PC-3 (cell line): ENCODE measurements at regions of chr7 and their contacts with region 1.

Region 1: GRCh38 chr7:87152107-87152844 is at the start of gene DMTF1:
- DNase-seq: peak; percentile 91
- ATAC-seq: peak; percentile 81
- H3K4me3 ChIP-seq: peak within 1 kb of the TSS; percentile 97
- H3K27ac ChIP-seq: peak within 1 kb of the TSS; percentile 91
- H3K4me1 ChIP-seq: peaks cover 34% of the 10 kb centered on the region
- H3K27me3 ChIP-seq: no peaks in the 10 kb centered on the region
- CTCF ChIP-seq: no peak
- total RNA-seq, gene DMTF1: 43.6 and 48.8 TPM in 2 replicates

Region 2: DNA sequence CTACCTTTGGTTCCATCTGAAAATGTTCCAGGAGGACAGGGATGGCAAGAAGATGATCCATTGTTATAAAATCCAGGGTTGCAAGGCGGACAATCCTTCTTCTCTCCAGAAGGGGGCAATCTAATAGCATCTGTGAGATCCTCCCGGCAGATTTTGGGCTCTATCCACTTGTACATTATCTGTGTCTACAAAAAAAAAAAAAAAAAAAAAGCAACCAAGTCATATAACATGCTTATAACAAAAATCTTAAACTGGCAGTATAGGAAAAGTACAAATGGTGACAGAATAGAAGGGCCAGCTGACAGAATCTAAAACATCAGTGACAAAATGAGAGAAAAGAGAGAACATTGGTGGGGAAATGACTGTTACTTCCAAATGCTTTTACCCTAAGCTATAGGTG is 225.5 kb before region 1 on chr7:
- CTCF ChIA-PET with region 1: interaction called, 4 read pairs
- POLR2A ChIA-PET with region 1: no interaction called
- intact Hi-C with region 1: loop called (anchors 1 kb)
- DNase-seq: peak; percentile 70
- ATAC-seq: peak; percentile 72
- H3K4me3 ChIP-seq: no peak overlapping the region
- H3K27ac ChIP-seq: no peak overlapping the region
- H3K4me1 ChIP-seq: peaks cover 4% of the 10 kb centered on the region
- H3K27me3 ChIP-seq: no peaks in the 10 kb centered on the region
- CTCF ChIP-seq: peak; percentile 78

Region 3: DNA sequence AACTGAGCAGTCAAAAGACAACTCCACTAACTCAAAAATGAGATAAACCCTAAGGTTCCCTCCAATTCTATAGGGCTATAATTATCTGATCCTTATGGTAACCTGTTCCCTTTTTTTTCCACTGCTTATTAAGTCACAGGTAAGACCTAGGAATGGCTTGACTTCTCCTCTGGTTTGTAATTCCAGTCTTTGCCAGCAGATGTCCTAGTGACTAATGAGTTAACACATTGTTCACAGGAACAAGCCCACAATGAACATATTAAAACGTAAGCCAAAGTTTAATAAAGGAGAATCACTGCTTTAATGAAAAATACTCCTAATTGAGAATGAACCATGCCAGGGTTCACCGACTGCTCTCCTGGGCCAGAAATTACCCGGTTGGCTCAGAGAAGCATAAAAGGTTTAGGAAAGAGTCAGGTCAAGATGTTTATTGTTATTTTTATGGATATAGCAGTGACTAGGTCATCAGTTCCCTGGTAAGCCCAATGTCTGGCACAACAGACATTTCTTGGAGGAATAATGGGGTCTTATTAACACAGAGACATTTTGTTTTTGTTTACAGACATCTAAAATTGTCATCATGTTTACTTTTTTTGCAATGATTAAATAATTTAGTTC is 213.0 kb before region 1 on chr7:
- CTCF ChIA-PET with region 1: interaction called, 4 read pairs
- POLR2A ChIA-PET with region 1: no interaction called
- intact Hi-C with region 1: loop called (anchors 1 kb)
- DNase-seq: peak; percentile 87
- ATAC-seq: peak; percentile 52
- H3K4me3 ChIP-seq: no peak overlapping the region
- H3K27ac ChIP-seq: no peak overlapping the region
- H3K4me1 ChIP-seq: peaks cover 11% of the 10 kb centered on the region; the same call in 1 of the 2 replicates
- H3K27me3 ChIP-seq: no peaks in the 10 kb centered on the region
- CTCF ChIP-seq: peak; percentile 84

Region 4: GRCh38 chr7:87219545-87220025 is 67.3 kb after region 1 on chr7 and contains the start of gene TMEM243:
- CTCF ChIA-PET with region 1: interaction called, 3 read pairs
- POLR2A ChIA-PET with region 1: no interaction called
- intact Hi-C with region 1: loop called (anchors 1 kb)
- DNase-seq: peak; percentile 54
- ATAC-seq: peak; percentile 60
- H3K4me3 ChIP-seq: peak within 1 kb of the TSS; percentile 94
- H3K27ac ChIP-seq: peak within 1 kb of the TSS; percentile 14; the same call in 1 of the 2 replicates
- H3K4me1 ChIP-seq: peaks cover 8% of the 10 kb centered on the region; the same call in 1 of the 2 replicates
- H3K27me3 ChIP-seq: no peaks in the 10 kb centered on the region
- CTCF ChIP-seq: peak; percentile 9; the same call in 1 of the 2 replicates
- total RNA-seq, gene TMEM243: 16.6 and 18.8 TPM in 2 replicates

Region 5: DNA sequence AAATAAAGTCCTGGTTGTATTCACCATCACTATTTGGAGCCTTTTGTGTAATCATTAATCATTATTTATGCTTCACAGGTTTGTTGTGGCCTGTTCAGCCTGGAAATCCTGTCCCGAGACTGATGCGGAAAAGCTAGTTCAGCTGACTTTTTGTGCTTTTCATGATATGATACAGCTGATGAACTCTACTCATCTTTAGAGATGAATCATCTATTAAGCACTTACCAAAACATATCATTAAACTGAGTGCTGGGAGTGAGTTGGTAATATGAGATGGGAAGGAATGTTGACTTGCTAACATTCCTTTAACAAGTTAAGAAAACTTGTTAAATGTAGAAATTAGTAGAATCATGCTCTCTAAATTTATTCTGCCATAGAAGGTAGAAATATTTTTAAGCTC is 246.2 kb after region 1 on chr7:
- CTCF ChIA-PET with region 1: no interaction called
- POLR2A ChIA-PET with region 1: no interaction called
- intact Hi-C with region 1: no loop called
- DNase-seq: peak; percentile 73
- ATAC-seq: peak; percentile 87
- H3K4me3 ChIP-seq: no peak overlapping the region
- H3K27ac ChIP-seq: no peak overlapping the region
- H3K4me1 ChIP-seq: peaks cover 29% of the 10 kb centered on the region
- H3K27me3 ChIP-seq: no peaks in the 10 kb centered on the region
- CTCF ChIP-seq: no peak

Region 6: DNA sequence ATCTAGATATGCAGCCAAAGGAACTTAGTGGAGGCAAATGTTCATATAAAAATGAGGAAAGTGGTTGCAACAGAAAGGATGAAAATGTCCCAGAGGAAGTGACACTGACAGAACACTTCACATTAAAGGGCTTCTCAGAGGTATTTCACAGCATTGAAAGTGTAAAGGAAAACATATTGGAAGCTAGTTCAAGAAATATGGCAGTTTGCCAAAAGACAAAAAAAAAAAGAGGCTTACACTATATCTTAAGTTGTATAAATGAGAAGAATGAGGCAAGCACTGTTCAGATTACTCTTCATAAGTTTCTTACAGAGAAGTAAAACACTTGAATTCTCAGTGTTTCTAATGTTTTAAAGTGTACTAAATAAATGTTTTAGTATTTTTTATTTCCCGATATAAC is 496.0 kb after region 1 on chr7:
- CTCF ChIA-PET with region 1: no interaction called
- POLR2A ChIA-PET with region 1: no interaction called
- intact Hi-C with region 1: no loop called
- DNase-seq: no peak
- ATAC-seq: no peak
- H3K4me3 ChIP-seq: no peak overlapping the region
- H3K27ac ChIP-seq: no peak overlapping the region
- H3K4me1 ChIP-seq: no peaks in the 10 kb centered on the region
- H3K27me3 ChIP-seq: peaks cover 10% of the 10 kb centered on the region; the same call in 1 of the 2 replicates
- CTCF ChIP-seq: no peak